Head of caudate nucleus (tissue), 42 donors: ENCODE measurements at regions of chr6 and their contacts with region 1.

Region 1: DNA sequence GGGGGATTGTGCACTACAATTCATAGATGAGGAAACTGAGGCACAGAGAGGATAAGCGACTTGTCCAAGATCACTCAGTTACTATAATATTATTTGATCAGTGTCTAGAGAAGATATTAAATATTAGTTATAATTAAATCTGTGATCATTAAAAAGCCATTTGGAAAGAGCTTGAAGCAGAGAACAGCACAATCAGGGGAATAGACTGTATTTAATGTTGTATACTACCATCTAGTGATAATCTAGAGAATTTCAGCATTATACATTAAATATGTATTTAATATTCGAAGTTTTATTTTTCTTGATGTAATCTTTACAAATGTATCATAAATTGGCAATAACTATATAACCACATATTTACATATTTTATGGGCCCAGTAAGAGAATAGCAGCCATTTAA is 20.1 kb upstream of the MTCL3 start:
- DNase-seq: no peak

Region 2: GRCh38 chr6:127255286-127255685 is 284.0 kb before region 1 on chr6:
- intact Hi-C with region 1: no loop called
- DNase-seq: no peak

Region 3: GRCh38 chr6:127302728-127303660 is 236.3 kb before region 1 on chr6:
- intact Hi-C with region 1: loop called (anchors 10 kb)
- DNase-seq: peak in 19 of 42 donors; percentile 19 to 74 (median 34)

Region 4: GRCh38 chr6:127464881-127465459 is 74.3 kb before region 1 on chr6:
- intact Hi-C with region 1: loop called (anchors 2 kb)
- DNase-seq: peak; percentile 43 to 91 (median 76)

Region 5: GRCh38 chr6:127570739-127571389 is 31.6 kb after region 1 on chr6:
- intact Hi-C with region 1: no loop called
- DNase-seq: no peak